Activated naive CD8-positive, alpha-beta T cell treated with anti-CD3 and anti-CD28 coated beads, Interleukin-2, amount 10 ng/mL, durations not matched to agents 7 days and 5 days (primary cell): ENCODE measurements at regions of chr15 and their contacts with region 1.

Region 1: GRCh38 chr15:91308199-91308598 is 208.1 kb downstream of the SV2B start:
- DNase-seq: no peak
- ATAC-seq: peak; percentile 56
- H3K4me3 Mint-ChIP-seq: peak overlapping the region; percentile 69
- H3K27ac Mint-ChIP-seq: peak overlapping the region; percentile 87
- H3K4me1 Mint-ChIP-seq: peaks cover 82% of the 10 kb centered on the region
- H3K27me3 Mint-ChIP-seq: peaks cover 5% of the 10 kb centered on the region

Region 2: GRCh38 chr15:91320101-91320500 is 11.9 kb after region 1 on chr15:
- POLR2A ChIA-PET with region 1: interaction called, 10 read pairs
- DNase-seq: no peak
- ATAC-seq: peak; percentile 87
- H3K4me3 Mint-ChIP-seq: peak overlapping the region; percentile 74
- H3K27ac Mint-ChIP-seq: peak overlapping the region; percentile 90
- H3K4me1 Mint-ChIP-seq: peaks cover 52% of the 10 kb centered on the region
- H3K27me3 Mint-ChIP-seq: peaks cover 3% of the 10 kb centered on the region

Region 3: DNA sequence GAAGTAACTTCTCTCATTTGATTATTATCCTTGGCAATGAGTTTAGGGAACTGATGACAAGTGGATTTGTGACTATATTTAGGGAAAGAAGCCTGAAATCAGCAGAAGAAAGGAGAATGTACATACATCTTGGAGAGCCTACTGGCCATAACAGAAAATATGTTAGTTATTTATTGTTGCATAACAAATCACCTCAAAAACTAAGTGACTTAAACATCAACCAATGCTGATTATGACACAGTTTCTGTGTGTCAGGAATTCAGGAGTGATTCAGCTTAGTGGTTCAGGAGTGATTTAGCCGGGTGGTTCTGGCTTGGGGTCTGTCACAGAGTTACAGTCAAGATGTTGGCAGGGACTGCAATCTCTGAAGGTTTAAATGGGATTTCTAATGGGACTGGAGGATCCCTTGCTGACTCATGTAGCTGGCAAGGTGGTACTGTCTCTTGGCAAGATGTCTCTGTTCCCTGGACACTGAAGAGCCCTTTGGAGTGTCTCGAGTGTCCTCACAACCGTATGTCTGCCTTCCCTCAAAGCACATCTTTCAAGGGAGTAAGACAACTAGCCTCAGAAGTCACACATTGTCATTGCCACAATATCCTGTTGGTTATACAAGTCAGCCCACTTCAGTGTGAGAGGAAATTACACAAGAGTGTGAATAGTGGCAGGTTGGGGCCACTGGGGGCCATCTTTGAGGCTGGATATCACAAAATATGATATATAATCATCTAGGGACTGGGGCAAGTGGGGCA is 40.7 kb after region 1 on chr15:
- POLR2A ChIA-PET with region 1: interaction called, 15 read pairs
- DNase-seq: no peak
- ATAC-seq: peak; percentile 98
- H3K4me3 Mint-ChIP-seq: peak overlapping the region; percentile 70
- H3K27ac Mint-ChIP-seq: peak overlapping the region; percentile 93
- H3K4me1 Mint-ChIP-seq: peaks cover 37% of the 10 kb centered on the region
- H3K27me3 Mint-ChIP-seq: peaks cover 3% of the 10 kb centered on the region

Region 4: GRCh38 chr15:91469632-91470567 is 161.7 kb after region 1 on chr15:
- POLR2A ChIA-PET with region 1: interaction called, 15 read pairs
- DNase-seq: peak; percentile 75
- ATAC-seq: peak; percentile 86
- H3K4me3 Mint-ChIP-seq: peak overlapping the region; percentile 72
- H3K27ac Mint-ChIP-seq: peak overlapping the region; percentile 99
- H3K4me1 Mint-ChIP-seq: peaks cover 55% of the 10 kb centered on the region
- H3K27me3 Mint-ChIP-seq: no peaks in the 10 kb centered on the region

Region 5: DNA sequence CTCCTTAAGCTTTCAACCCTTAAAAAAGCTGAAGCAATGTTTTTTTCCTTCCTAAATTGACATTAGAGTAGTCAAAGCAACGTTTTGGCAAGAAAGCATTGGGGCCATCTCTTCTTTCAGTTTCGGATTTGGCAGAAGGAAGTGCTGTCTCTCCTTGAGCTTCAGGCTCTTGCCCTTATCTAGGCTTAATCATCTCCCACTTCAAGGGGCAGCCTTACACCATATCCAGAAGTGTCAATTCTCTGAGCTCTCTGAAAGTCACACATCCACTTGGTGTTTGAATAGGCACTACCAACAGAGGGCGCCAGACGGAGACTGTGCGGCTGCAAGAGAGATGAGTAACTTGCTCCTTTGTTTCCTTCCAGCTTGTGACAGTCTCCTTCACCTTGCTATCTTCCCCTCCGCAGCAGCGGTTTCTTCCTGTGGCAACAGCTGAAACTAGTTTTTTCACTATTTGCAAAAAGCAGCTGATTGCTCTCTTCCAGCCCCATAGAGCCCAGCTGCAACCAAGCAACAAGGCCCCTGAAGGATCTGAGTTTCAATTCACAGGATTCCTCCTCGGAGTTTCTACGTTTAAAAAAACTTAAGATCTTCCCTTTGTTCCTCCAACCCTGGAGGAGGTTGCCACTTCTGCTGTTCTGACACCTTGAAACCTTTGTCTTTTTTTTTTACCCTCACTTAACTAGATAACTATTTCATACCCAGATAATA is 398.3 kb after region 1 on chr15:
- POLR2A ChIA-PET with region 1: interaction called, 10 read pairs
- DNase-seq: peak; percentile 79
- ATAC-seq: peak; percentile 99
- H3K4me3 Mint-ChIP-seq: peak overlapping the region; percentile 71
- H3K27ac Mint-ChIP-seq: peak overlapping the region; percentile 90
- H3K4me1 Mint-ChIP-seq: peaks cover 33% of the 10 kb centered on the region
- H3K27me3 Mint-ChIP-seq: peaks cover 17% of the 10 kb centered on the region